OCI-LY7 (cell line): ENCODE measurements at regions of chr13 and their contacts with region 1.

Region 1: DNA sequence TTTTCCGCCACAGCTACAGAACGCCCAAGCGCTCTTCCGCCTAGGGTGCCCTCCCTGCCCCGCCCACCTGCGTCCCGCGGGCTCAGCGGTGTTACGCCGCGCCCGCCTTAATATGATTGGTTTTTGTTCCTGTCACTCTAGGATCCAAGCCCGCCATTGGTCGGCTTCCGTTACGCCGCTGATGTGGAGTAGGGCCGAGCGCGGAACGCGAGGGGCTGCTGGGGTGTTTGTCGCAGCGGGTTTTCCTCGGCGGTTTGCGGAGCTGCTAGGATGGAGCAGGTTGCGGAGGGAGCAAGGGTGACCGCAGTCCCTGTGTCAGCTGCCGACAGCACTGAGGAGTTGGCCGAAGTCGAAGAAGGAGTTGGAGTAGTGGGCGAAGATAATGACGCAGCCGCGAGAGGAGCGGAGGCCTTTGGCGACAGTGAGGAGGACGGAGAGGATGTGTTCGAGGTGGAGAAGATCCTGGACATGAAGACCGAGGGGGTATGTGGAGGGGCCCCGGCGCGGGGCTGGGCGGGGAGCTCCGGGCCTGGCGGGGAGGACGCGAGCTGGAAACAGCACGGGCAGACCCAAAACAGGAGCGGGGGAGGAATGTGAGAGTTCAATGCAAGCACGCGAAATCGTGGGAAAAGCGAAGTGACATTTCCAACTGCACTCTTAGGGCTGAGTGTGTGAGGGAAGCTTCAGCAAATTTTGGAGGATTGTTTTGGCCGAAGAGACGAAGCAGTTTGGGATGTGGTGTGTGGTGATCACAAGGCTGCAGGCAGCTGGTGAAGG is at the start of gene MPHOSPH8:
- DNase-seq: peak; percentile 98
- H3K4me3 ChIP-seq: peak within 1 kb of the TSS; percentile 91
- H3K27ac ChIP-seq: peak within 1 kb of the TSS; percentile 32
- H3K4me1 ChIP-seq: peaks cover 17% of the 10 kb centered on the region
- CTCF ChIP-seq: no peak
- total RNA-seq, gene MPHOSPH8: 12.8 and 15.9 TPM in 2 replicates

Region 2: DNA sequence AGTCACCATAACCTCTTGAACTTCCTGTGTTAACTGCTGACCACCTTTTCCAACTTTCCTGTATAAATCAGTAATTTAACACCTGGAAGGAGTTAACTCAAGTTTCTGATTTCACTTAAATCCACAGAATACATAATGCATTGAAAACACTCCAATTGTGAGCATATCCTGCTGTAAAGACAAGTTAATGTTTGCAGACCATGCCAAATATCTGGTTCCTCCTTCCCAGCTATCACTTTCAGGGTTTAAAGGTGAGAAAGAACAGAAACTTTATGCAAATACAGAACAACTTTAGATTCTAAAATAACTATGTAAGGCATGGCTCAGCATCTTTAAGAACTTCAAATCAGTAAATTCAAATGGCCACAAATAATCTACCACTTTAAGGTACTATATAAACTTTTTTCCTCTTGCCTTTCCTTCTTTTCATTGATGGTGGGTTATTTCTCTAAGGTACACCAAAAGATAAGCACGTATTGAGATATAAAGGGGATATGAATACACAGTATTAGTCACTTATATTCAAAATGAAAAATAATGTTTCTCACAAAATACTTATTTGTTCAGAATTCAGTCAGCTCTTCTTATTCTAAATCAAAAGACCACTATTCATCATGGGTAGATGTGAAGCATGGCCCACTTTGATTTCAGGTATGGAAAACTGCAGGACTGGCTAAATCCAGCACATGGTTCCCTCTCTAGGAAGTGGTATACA is 65.7 kb before region 1 on chr13:
- CTCF ChIA-PET with region 1: no interaction called
- POLR2A ChIA-PET with region 1: interaction called, 4 read pairs
- intact Hi-C with region 1: loop called (anchors 2 kb)
- DNase-seq: no peak
- H3K4me3 ChIP-seq: no peak overlapping the region
- H3K27ac ChIP-seq: no peak overlapping the region
- H3K4me1 ChIP-seq: peaks cover 5% of the 10 kb centered on the region
- CTCF ChIP-seq: no peak

Region 3: GRCh38 chr13:19581675-19582074 is 52.0 kb before region 1 on chr13:
- CTCF ChIA-PET with region 1: no interaction called
- POLR2A ChIA-PET with region 1: no interaction called
- intact Hi-C with region 1: no loop called
- DNase-seq: no peak
- H3K4me3 ChIP-seq: no peak overlapping the region
- H3K27ac ChIP-seq: no peak overlapping the region
- H3K4me1 ChIP-seq: peaks cover 1% of the 10 kb centered on the region
- CTCF ChIP-seq: no peak

Region 4: GRCh38 chr13:19645000-19645399 is 11.3 kb after region 1 on chr13:
- CTCF ChIA-PET with region 1: no interaction called
- POLR2A ChIA-PET with region 1: no interaction called
- intact Hi-C with region 1: no loop called
- DNase-seq: no peak
- H3K4me3 ChIP-seq: no peak overlapping the region
- H3K27ac ChIP-seq: no peak overlapping the region
- H3K4me1 ChIP-seq: no peaks in the 10 kb centered on the region
- CTCF ChIP-seq: no peak

Region 5: DNA sequence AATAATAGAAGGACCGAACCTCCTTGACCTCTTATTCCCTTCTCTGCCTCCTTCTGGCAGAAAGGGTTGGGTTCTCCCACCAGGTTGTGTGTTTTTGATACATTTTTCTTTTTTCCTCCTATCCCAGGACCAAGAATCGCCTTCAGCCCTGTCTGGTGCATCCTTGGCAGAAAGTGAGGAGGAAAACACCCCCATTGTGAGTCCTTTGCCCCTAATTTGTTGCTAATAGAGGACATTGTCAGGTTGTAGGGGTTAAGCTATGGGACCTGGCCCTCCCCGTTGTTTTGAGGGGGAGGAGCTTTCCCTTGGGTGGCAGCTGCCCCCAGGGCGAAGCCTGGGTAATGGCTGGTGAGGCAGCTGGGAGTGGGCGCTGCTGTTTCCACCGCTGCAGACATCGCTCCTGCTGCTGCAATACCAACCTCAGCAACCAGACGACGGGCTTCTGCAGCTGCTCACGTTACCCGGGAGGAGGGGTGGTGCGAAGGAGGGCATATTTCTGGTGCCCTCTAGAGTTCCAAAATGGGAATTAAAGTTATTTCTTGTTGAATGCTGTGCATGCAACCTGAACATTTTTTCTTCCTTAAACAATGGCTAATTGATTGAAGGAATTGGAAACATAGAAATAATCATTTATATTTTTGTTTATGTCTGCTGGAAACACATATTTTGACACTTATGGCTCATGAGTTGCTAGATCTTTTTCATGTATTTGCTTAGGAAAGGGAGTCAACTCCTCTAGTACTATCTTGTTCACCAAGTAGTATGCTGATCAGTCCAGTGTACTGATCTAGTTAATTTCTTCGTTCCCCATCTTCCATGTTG is 326.4 kb after region 1 on chr13:
- CTCF ChIA-PET with region 1: no interaction called
- POLR2A ChIA-PET with region 1: interaction called, 3 read pairs
- intact Hi-C with region 1: loop called (anchors 10 kb)
- DNase-seq: peak; percentile 94
- H3K4me3 ChIP-seq: peak overlapping the region; percentile 96
- H3K27ac ChIP-seq: peak overlapping the region; percentile 83
- H3K4me1 ChIP-seq: peaks cover 28% of the 10 kb centered on the region
- CTCF ChIP-seq: peak; percentile 86